H1 (cell line): ENCODE measurements at regions of chr12 and their contacts with region 1.

Region 1: GRCh38 chr12:113103756-113104450 is 31.7 kb downstream of the RASAL1 start:
- DNase-seq: peak; percentile 70 to 89
- H3K4me3 ChIP-seq: peak overlapping the region; percentile 35 to 65 (median 46)
- H3K27ac ChIP-seq: peak overlapping the region; percentile 45; the same call in 1 of the 2 replicates
- H3K4me1 ChIP-seq: peaks cover 0 to 3% (median 1%) of the 10 kb centered on the region in 4 experiments; a peak in 2 of 7 replicates
- H3K27me3 ChIP-seq: 0 out of 7 replicates have a peak, but pooled peaks cover 0 to 2% (median 0%) of the 10 kb centered on the region in 4 experiments
- CTCF ChIP-seq: peak; percentile 13 to 36 (median 26)
- EP300 ChIP-seq: no peak
- POLR2A ChIP-seq: peak in 1 of 2 experiments; percentile 65; a peak in 1 of 3 replicates
- RAD21 ChIP-seq: 0 out of 4 replicates have a peak, but pooled peaks of 1 of the 2 experiments have one; percentile 7

Region 2: DNA sequence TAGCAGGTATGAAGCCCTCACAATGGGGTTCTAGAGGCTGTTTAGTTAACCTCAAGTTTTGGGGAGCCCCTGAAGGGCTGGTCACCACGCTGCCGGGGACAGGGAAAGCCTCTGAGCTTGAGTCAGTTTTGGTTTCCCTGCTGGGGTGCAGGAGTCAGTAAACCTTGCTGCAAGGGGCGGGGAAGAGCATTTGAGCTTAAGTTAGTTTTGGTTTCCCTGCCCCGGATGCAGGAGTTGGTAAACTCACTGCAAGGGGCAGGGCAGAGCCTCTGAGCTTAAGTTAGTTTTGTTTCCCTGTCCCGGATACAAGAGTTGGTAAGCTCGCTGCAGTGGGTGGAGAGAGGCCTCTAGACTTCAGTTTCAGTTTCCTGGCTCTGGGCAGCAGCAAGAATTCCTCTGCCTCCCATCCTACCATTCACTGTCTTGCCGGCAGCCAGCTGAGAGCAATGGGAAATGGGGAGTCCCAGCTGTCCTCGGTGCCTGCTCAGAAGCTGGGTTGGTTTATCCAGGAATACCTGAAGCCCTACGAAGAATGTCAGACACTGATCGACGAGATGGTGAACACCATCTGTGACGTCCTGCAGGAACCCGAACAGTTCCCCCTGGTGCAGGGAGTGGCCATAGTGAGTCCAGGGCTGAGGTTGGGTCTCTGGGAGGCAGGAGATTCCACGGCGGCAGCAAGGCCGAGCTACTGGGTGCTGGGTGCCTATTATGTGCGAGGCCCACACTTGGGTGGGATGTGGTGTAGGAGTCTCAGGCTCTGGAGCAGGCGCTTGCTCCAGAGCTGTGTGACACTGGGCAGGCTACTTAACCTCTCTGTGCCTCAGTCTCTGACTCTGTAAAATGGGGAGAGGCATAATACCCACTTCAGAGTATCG is 125.5 kb before region 1 on chr12 and contains the start of gene OAS2:
- CTCF ChIA-PET with region 1: no interaction called
- POLR2A ChIA-PET with region 1: no interaction called
- DNase-seq: no peak
- H3K4me3 ChIP-seq: no peak within 1 kb of the TSS
- H3K27ac ChIP-seq: no peak within 1 kb of the TSS
- H3K4me1 ChIP-seq: peaks cover 0 to 5% (median 0%) of the 10 kb centered on the region in 4 experiments; a peak in 1 of 7 replicates
- H3K27me3 ChIP-seq: no peaks in the 10 kb centered on the region; a peak in 2 of 7 replicates
- CTCF ChIP-seq: no peak
- EP300 ChIP-seq: no peak
- POLR2A ChIP-seq: no peak
- RAD21 ChIP-seq: no peak
- total RNA-seq, gene OAS2: not detected in 2 replicates

Region 3: DNA sequence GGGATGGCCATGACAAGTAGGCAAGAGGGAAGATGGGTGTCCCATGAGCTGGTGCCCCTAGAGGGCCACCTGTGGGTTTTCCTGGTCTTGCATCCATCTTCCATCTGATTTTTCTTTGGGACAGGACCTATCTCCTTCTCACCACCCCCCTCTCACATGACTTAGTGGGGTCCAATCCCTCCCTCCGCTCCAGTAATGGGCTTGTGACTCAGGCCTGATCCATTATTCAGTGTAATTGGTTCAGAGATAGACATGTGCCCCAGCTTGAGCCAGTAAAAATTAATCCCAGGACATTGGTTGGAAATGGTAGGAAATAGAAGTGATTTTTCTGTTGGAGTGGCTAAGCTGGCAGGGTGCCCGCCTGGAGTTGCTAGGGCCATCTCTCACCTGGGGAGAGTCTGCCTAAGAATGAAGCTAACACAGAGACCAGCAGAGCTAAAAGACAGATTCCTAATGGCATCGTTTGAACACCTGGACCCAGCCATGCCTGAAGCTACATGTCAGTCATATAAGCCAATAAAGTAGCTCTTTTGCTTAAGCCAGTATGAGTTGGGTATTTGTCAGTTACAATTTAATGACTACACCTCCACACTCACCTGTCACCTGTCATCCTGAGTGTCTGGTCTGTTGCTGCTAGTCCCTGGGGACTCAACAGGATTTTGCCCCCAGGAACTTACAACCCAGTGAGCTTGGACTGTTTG is 16.9 kb after region 1 on chr12:
- CTCF ChIA-PET with region 1: interaction called, 8 read pairs
- POLR2A ChIA-PET with region 1: interaction called, 14 read pairs
- DNase-seq: no peak
- H3K4me3 ChIP-seq: no peak overlapping the region
- H3K27ac ChIP-seq: no peak overlapping the region
- H3K4me1 ChIP-seq: no peaks in the 10 kb centered on the region
- H3K27me3 ChIP-seq: peaks cover 0 to 2% (median 0%) of the 10 kb centered on the region in 4 experiments; a peak in 1 of 7 replicates
- CTCF ChIP-seq: no peak
- EP300 ChIP-seq: no peak
- POLR2A ChIP-seq: no peak
- RAD21 ChIP-seq: no peak

Region 4: DNA sequence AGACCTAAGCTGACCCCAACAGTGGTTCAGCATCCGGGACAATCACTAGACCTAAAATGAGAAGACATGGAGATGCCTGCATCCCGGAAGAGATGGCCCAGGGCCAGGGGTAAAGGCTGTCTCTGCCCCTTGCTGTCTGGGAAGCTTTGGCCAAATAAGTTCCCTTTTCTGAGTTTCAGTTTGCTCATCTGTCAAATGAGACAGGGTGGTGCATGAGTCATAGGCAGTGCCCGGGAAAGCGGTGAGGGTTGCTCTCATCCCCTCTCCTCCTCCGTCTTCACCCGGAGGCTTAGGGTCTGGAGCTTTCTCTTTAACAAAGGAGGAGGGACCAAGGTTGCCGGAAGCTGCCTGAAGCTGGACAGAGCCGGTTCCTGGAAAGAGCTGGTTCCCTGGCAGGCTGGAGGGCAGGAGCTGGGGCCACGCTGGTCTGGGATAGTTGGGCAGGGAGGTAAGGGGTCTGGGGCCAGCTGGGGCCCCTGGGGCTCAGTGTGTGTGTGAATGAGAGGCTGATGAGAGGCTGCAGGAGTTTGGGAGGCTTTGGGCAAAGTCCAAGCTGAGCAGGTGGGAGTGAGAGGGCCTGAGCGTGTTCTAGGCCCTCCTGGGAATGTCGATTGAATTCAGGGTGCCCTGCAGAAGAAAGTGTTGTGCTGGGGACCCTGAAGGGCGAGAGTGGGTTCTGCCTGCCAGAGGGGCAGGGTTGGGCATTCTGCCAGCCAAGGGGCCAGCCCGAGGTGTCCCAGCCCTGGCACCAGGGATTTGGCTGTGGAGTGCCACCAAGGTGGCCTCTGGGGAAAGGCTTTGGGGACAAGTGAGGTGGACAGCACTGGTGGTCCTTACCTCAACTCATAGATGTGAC is 318.4 kb after region 1 on chr12 and contains the start of gene SDSL:
- CTCF ChIA-PET with region 1: no interaction called
- POLR2A ChIA-PET with region 1: no interaction called
- DNase-seq: peak in 1 of 2 experiments; percentile 29
- H3K4me3 ChIP-seq: no peak within 1 kb of the TSS
- H3K27ac ChIP-seq: no peak within 1 kb of the TSS
- H3K4me1 ChIP-seq: peaks cover 0 to 7% (median 5%) of the 10 kb centered on the region in 4 experiments; a peak in 5 of 7 replicates
- H3K27me3 ChIP-seq: no peaks in the 10 kb centered on the region
- CTCF ChIP-seq: no peak
- EP300 ChIP-seq: no peak
- POLR2A ChIP-seq: peak in 1 of 2 experiments; percentile 11; a peak in 1 of 3 replicates
- RAD21 ChIP-seq: no peak
- total RNA-seq, gene SDSL: 0.69 TPM in 1 of 2 replicates, not detected in the other